KBM-7 (cell line): ENCODE measurements at regions of chrX and their contacts with region 1.

Region 1: GRCh38 chrX:134969726-134970125 is 21.1 kb upstream of the SMIM10 start:
- DNase-seq: no peak

Region 2: DNA sequence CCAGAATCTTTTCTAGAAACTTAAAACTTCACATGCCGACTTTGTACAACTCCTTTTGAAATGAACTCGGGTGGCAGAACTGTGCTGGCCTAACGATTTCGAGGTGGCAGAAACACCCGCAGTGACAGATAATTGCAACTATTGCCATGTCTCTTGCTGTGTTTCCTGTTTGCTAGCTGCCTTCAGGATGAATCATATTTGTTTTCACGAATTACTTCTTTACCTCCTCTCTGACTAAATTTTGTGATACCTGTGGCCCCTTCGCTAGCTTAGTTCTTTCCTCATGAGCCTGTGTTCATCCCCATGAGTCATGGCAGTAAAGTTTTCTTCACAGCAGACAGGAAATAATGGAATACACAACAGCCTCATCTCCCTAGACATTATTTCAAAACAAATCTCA is 83.5 kb before region 1 on chrX:
- in situ Hi-C with region 1: no loop called
- DNase-seq: no peak

Region 3: DNA sequence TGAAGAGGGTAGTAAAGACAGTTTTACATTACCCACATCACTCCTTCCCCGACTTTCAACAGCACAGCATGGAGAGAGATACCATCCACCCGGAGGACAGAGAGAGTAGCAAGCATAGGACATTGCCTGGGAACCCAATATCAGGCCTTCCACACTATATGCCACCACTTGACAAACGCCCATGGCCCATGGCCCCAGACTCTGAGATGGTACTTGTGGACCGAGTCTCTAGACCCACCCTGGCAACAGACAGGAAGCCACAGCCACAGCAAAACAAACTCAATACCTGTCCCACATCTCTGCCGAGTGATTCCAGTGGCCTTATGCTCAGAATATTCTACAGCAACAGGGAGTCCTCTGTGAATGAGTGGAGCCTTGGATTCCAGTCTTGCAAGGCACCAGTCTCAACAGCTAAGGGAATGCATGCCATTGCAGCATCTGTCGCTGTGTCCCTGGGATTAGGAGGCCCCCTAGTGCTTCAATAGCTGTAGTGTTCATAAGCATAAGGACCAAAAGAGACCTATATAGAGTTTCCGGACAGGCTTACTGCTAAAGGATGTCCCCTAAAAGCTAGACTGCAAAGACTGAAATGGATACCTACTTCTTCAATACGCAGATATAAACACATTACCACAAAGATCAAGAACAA is 216.2 kb after region 1 on chrX:
- in situ Hi-C with region 1: loop called (anchors 25 kb)
- DNase-seq: peak; percentile 59